ENCODE measurements at regions of chr6 and their contacts with region 1.

Region 1: DNA sequence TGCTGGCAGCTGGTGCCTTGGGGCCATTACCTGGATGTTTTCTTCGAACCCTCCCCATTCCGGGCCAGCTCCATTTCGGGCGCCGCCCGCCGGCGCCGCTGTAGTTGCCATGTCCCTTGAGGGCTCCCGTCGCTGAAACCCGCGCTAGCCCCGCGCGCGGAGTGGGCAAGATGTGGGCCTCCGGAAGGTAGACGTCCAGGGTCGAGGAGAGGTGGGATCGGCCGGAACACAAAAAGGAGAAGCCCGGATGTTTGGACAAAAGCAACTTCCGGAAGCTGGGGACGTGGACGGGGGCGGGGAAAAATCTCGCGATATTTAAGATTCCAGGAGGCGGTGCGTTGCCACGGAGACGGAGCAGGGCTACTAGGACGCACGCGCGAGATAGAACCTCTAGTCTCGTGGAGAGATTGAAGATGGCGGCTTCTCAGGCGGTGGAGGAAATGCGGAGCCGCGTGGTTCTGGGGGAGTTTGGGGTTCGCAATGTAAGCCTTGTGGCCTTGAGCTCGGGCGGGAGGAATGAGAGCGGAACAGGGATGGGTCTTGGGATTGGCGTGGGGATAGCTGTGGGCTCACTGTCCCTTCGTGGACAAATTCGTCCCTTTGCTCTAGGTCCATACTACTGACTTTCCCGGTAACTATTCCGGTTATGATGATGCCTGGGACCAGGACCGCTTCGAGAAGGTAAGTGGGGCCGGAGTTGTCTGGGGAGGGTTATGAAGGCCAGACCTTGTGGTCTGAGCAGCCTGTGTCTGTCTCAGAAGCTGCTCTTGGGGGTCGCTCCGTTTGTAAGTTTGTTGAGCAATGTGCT is at the starts of genes POLR1C and YIPF3:
- DNase-seq: peak; percentile 96 to 98 (median 98)
- ATAC-seq: peak; percentile 92 to 96 (median 92)
- H3K4me3 ChIP-seq: peak within 1 kb of the TSS; percentile 42 to 99 (median 78)
- H3K27ac ChIP-seq: peak within 1 kb of the TSS; percentile 57 to 98 (median 90)
- H3K4me1 ChIP-seq: peaks cover 18 to 66% (median 49%) of the 10 kb centered on the region in 12 donors
- H3K27me3 ChIP-seq: no peaks in the 10 kb centered on the region
- CTCF ChIP-seq: no peak
- POLR2A ChIP-seq: peak in 1 of 2 donors; percentile 73
- total RNA-seq, gene POLR1C: 9.5 to 20.6 (median 13.5) TPM
- total RNA-seq, gene YIPF3: 63.4 to 90.3 (median 75.3) TPM

Region 2: DNA sequence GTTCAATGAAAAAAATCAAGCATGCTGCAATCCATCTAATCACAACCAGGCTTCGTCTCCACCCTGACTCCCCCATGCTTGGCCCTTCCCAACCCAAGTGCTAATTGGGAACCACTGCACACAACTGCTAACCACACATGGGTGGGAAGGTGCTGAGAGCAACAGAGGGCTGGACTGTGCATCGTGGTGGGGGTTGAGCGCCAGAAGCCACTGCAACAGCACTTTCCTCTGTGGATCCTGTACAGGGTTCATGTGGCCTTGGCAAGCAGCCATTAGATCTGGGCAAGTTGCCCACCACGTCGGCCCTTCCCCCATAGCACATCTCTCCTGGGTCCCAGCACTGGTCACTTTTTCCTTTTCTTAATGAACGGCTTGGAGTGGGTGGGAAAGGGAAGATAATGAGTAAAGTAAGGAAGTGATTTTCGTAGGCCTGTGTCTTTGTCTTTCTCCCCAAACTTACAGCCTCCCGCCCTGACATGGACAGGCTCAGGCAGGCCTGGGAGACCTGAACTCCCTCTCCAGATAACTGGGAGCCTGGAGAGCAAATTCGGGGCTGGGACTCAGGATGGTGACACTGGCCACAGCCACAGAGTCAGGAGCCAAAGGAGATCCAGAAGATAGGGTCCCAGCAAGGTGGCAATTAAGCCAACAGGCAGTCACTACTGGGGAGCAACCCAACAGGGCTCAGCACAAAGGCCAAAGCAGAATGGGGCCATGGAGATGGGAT is 1264.8 kb before region 1 on chr6:
- intact Hi-C with region 1: no loop called
- DNase-seq: peak; percentile 78 to 87 (median 84)
- ATAC-seq: peak; percentile 62 to 88 (median 85)
- H3K4me3 ChIP-seq: no peak overlapping the region
- H3K27ac ChIP-seq: peak overlapping the region; percentile 22 to 86 (median 74)
- H3K4me1 ChIP-seq: peaks cover 0 to 48% (median 22%) of the 10 kb centered on the region in 12 donors
- H3K27me3 ChIP-seq: no peaks in the 10 kb centered on the region
- CTCF ChIP-seq: no peak
- POLR2A ChIP-seq: no peak

Region 3: GRCh38 chr6:43575772-43576551 is 59.1 kb after region 1 on chr6 and contains the starts of genes POLH and XPO5:
- intact Hi-C with region 1: loop called in 2 of 10 experiments (anchors 5 kb)
- DNase-seq: peak; percentile 91 to 96 (median 94)
- ATAC-seq: peak; percentile 97 to 100 (median 99)
- H3K4me3 ChIP-seq: peak within 1 kb of the TSS; percentile 73 to 98 (median 94)
- H3K27ac ChIP-seq: peak within 1 kb of the TSS; percentile 21 to 87 (median 78)
- H3K4me1 ChIP-seq: peaks cover 4 to 45% (median 30%) of the 10 kb centered on the region in 12 donors
- H3K27me3 ChIP-seq: no peaks in the 10 kb centered on the region
- CTCF ChIP-seq: peak in 6 of 12 donors; percentile 13 to 51 (median 23)
- POLR2A ChIP-seq: peak in 1 of 2 donors; percentile 98
- total RNA-seq, gene POLH: 5.5 to 12.2 (median 10.1) TPM
- total RNA-seq, gene XPO5: 11.8 to 22.4 (median 17.2) TPM